ENCODE measurements at regions of chr11 and their contacts with region 1.

Region 1: DNA sequence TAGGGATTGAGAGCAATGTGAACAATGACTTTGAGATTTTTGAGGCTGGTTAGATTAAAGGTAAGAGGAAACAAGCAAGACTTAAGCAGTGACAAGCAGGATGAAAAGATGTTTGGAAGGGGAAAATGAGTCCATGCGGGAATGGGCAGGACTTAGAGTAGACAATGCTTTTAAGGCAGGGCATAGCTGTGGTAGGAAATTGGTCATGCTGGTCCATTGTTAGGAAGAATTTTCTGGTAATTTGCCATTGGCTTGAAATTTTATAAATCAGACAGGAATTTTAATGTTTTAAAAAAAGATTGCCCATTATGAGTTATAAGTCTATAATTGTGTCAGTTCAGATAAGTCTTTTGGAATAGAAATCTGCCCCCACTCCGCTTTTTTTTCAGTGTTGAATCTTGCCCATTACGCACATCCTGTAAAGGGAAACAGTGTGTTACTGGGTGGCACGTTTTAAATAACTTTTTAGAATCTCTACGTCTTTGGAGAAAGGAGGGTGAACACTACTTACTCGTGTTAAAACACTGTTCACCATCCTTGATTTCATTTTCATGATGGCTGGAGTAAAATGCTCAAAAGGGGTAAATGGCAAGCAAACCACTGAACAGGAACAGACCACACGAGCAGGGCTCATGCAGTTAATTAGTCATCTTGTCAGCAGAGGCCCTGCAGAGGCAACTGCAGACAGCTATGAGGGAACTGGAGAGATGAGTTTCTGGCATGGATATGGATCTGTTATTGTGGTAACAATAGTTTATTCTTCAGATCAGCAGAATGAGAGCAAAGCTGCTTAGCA is 25.0 kb downstream of the SWAP70 start:
- DNase-seq: peak; percentile 40
- H3K4me3 Mint-ChIP-seq: no peak overlapping the region
- H3K27ac Mint-ChIP-seq: no peak overlapping the region
- H3K4me1 Mint-ChIP-seq: peaks cover 9% of the 10 kb centered on the region
- H3K27me3 Mint-ChIP-seq: no peaks in the 10 kb centered on the region
- CTCF ChIP-seq: no peak

Region 2: GRCh38 chr11:9663699-9664275 is 25.1 kb before region 1 on chr11 and contains the start of gene SWAP70:
- CTCF ChIA-PET with region 1: no interaction called
- POLR2A ChIA-PET with region 1: interaction called, 13 read pairs
- intact Hi-C with region 1: no loop called
- DNase-seq: peak; percentile 75
- H3K4me3 Mint-ChIP-seq: peak within 1 kb of the TSS; percentile 91
- H3K27ac Mint-ChIP-seq: peak within 1 kb of the TSS; percentile 88
- H3K4me1 Mint-ChIP-seq: peaks cover 6% of the 10 kb centered on the region
- H3K27me3 Mint-ChIP-seq: no peaks in the 10 kb centered on the region
- CTCF ChIP-seq: peak; percentile 33
- total RNA-seq, gene SWAP70: 13.0 and 24.2 TPM in 2 replicates

Region 3: GRCh38 chr11:9710223-9710622 is 21.3 kb after region 1 on chr11:
- CTCF ChIA-PET with region 1: no interaction called
- POLR2A ChIA-PET with region 1: no interaction called
- intact Hi-C with region 1: no loop called
- DNase-seq: no peak
- H3K4me3 Mint-ChIP-seq: no peak overlapping the region
- H3K27ac Mint-ChIP-seq: no peak overlapping the region
- H3K4me1 Mint-ChIP-seq: no peaks in the 10 kb centered on the region
- H3K27me3 Mint-ChIP-seq: no peaks in the 10 kb centered on the region
- CTCF ChIP-seq: no peak

Region 4: GRCh38 chr11:9855579-9856287 is 166.8 kb after region 1 on chr11:
- CTCF ChIA-PET with region 1: no interaction called
- POLR2A ChIA-PET with region 1: no interaction called
- intact Hi-C with region 1: no loop called
- DNase-seq: no peak
- H3K4me3 Mint-ChIP-seq: no peak overlapping the region
- H3K27ac Mint-ChIP-seq: no peak overlapping the region
- H3K4me1 Mint-ChIP-seq: no peaks in the 10 kb centered on the region
- H3K27me3 Mint-ChIP-seq: no peaks in the 10 kb centered on the region
- CTCF ChIP-seq: no peak